ENCODE measurements at regions of chr20 and their contacts with region 1.

Region 1: DNA sequence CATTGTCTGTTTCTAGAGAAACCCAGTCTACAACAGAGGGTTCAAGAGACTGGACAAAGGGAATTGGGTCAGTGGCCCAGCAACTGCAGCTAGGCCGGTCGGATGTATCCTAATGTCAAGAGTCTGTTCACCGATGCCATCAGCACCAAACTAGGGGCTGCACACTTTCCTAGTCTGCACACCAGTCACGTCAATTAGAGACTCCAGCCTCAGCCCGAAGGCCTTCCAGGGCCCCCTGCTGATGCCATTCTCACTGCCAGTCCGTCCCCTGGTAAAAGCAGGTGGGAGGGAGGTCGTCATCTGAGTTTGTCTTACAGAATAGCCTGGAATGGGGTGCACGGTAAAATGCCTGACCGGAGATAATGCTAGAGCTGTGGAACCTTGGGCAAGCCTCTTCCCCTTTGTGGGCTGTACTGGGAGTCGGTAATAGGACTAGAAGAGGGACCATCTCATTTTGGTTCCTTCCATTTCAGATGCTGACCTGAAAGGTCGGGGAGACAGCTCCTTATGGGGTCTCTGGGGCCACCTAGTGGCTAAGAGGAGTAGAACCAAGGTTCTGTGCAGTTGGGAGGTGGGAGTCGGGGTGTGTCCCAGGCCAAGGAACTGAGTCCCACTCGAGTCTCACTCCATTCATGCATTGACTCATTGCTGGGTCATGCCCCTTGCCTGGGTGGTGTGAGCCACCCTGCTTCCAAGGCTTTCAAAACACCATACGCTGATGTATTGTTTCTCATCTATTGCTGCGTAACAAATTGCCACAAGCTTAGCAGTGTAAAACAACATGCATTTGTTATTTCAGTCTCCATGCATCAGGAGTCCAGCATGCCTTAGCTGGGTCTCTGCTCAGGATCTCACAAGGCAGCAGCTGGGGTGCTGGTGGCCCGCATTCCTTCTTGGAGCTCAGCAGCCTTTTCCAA is 5.1 kb downstream of the SOX12 start:
- DNase-seq: no peak
- ATAC-seq: peak; percentile 65
- H3K4me3 ChIP-seq: no peak overlapping the region
- H3K27ac ChIP-seq: no peak overlapping the region
- H3K4me1 ChIP-seq: peaks cover 15% of the 10 kb centered on the region
- H3K27me3 ChIP-seq: no peaks in the 10 kb centered on the region
- CTCF ChIP-seq: peak; percentile 84 to 94 (median 93); a peak in 5 of 6 replicates
- EP300 ChIP-seq: no peak
- POLR2A ChIP-seq: no peak
- RAD21 ChIP-seq: peak; percentile 93

Region 2: GRCh38 chr20:208942-209566 is 121.4 kb before region 1 on chr20:
- CTCF ChIA-PET with region 1: interaction called, 13 read pairs
- POLR2A ChIA-PET with region 1: no interaction called
- RAD21 ChIA-PET with region 1: interaction called, 6 read pairs
- SMC1A ChIA-PET with region 1: interaction called, 16 read pairs
- in situ Hi-C with region 1: loop called (anchors 5 kb)
- intact Hi-C with region 1: loop called (anchors 1 kb)
- DNase-seq: no peak
- ATAC-seq: peak; percentile 91
- H3K4me3 ChIP-seq: no peak overlapping the region
- H3K27ac ChIP-seq: no peak overlapping the region
- H3K4me1 ChIP-seq: no peaks in the 10 kb centered on the region
- H3K27me3 ChIP-seq: peaks cover 0 to 2% of the 10 kb centered on the region in 2 experiments; a peak in 1 of 4 replicates
- CTCF ChIP-seq: peak; percentile 50 to 70 (median 58); a peak in 5 of 6 replicates
- EP300 ChIP-seq: no peak
- POLR2A ChIP-seq: no peak
- RAD21 ChIP-seq: peak; percentile 82

Region 3: DNA sequence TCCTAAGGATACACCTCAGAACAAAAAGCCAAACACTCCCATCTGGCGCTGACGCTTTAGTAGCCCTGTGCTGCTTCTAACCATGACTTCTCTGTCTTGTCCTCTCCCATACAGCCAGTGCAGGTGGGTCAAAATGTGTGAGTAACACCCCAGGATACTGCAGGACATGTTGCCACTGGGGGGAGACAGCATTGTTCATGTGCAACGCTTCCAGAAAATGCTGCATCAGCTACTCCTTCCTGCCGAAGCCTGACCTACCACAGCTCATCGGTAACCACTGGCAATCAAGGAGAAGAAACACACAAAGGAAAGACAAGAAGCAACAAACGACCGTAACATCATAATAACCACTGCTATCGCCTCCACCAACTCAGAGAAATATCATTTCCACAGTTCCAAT is 71.5 kb before region 1 on chr20:
- CTCF ChIA-PET with region 1: interaction called, 59 read pairs
- POLR2A ChIA-PET with region 1: no interaction called
- RAD21 ChIA-PET with region 1: interaction called, 12 read pairs
- SMC1A ChIA-PET with region 1: interaction called, 7 read pairs
- in situ Hi-C with region 1: no loop called
- intact Hi-C with region 1: no loop called
- DNase-seq: no peak
- ATAC-seq: peak; percentile 73
- H3K4me3 ChIP-seq: no peak overlapping the region
- H3K27ac ChIP-seq: no peak overlapping the region
- H3K4me1 ChIP-seq: no peaks in the 10 kb centered on the region
- H3K27me3 ChIP-seq: no peaks in the 10 kb centered on the region; a peak in 1 of 4 replicates
- CTCF ChIP-seq: peak; percentile 20 to 36 (median 32); a peak in 4 of 6 replicates
- EP300 ChIP-seq: no peak
- POLR2A ChIP-seq: no peak
- RAD21 ChIP-seq: no peak

Region 4: DNA sequence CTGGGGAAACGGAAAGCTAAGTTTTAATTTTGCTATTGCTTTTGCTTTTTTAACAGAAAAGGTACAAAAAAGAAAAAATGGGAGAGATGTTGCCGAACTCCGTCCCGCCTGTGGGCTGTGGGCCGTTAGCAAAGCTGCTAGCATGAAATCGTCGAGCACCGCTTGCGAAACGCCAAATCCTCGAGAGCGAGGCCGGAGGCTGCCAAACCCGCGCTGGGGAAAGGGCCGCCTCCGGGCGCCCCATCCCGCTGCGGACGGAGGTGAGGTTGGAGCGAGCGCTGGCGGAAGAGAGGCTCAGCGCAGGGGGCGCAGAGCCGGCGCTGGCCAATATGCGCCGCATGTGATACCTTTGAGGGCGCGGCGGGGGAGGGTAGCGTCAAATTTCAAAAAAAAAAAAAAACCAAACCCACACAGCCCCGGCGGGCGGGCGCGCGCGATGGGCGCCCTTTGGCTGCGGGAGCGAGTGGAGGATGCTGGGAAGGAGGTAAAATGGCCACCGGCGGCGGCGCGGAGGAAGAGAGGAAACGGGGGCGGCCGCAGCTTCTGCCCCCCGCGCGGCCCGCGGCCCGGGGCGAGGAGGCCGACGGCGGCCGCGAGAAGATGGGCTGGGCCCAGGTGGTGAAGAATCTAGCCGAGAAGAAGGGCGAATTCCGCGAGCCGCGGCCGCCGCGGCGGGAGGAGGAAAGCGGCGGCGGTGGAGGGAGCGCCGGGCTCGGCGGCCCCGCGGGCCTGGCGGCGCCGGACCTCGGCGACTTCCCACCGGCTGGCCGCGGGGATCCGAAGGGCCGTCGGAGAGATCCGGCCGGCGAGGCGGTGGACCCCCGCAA is 33.2 kb before region 1 on chr20 and contains the start of gene ZCCHC3:
- CTCF ChIA-PET with region 1: interaction called, 15 read pairs
- POLR2A ChIA-PET with region 1: interaction called, 30 read pairs
- RAD21 ChIA-PET with region 1: interaction called, 4 read pairs
- SMC1A ChIA-PET with region 1: interaction called, 15 read pairs
- in situ Hi-C with region 1: no loop called
- intact Hi-C with region 1: no loop called
- DNase-seq: peak; percentile 59
- ATAC-seq: peak; percentile 86
- H3K4me3 ChIP-seq: peak within 1 kb of the TSS; percentile 94
- H3K27ac ChIP-seq: peak within 1 kb of the TSS; percentile 90
- H3K4me1 ChIP-seq: peaks cover 25% of the 10 kb centered on the region
- H3K27me3 ChIP-seq: no peaks in the 10 kb centered on the region
- CTCF ChIP-seq: peak; percentile 21 to 23 (median 23); a peak in 2 of 6 replicates
- EP300 ChIP-seq: no peak
- POLR2A ChIP-seq: peak; percentile 83
- RAD21 ChIP-seq: no peak
- polyA plus RNA-seq, gene ZCCHC3: 5.3 to 10.8 TPM

Region 5: DNA sequence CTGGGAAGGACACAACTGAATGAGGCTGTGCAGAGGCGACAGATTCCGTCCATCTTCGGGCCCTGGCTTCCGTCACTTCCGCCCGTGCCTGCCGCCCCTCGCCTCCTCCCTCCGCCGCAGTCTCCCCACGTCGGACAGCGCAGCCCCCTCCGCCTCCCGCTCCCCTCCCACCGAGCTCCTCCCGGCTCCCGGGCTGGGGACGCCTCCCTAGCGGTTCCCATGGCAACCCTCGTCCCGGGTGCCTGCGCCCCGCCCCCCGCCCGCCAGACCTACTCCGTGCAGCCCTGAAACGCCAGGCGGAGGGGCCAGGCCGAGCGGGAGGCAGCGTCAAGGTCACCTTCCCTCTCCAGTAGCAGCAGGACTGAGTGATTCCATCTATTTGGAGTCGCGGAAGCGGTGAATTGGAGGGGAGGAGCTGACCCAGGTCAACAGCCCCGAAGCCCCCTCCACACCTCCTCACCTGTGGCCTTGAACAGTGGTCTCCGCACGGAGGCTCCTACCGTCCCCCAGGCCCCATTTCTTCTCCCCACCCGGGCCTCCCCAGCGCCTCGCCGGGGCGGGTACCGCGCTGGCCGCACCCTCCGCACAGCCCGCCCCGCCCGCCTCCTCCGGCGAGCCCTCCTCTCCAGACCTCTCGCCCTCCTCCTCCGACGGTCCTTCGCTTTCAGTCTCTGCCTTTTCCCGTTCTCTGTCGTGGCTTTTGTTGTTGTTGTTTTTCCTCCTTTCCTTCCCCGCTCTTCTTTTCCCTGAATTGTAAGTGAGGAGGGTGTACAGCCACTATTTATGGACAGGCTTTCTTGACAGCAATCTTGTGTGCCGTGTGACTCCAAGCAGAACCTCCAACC is 17.4 kb after region 1 on chr20:
- CTCF ChIA-PET with region 1: interaction called, 27 read pairs
- POLR2A ChIA-PET with region 1: interaction called, 9 read pairs
- RAD21 ChIA-PET with region 1: interaction called, 5 read pairs
- SMC1A ChIA-PET with region 1: interaction called, 6 read pairs
- in situ Hi-C with region 1: no loop called
- intact Hi-C with region 1: no loop called
- DNase-seq: peak; percentile 64
- ATAC-seq: peak; percentile 89
- H3K4me3 ChIP-seq: peak overlapping the region; percentile 83
- H3K27ac ChIP-seq: peak overlapping the region; percentile 73
- H3K4me1 ChIP-seq: 0 out of 2 replicates have a peak, but pooled peaks cover 3% of the 10 kb centered on the region
- H3K27me3 ChIP-seq: no peaks in the 10 kb centered on the region
- CTCF ChIP-seq: no peak
- EP300 ChIP-seq: no peak
- POLR2A ChIP-seq: no peak; the same call in 1 of the 2 replicates
- RAD21 ChIP-seq: no peak

Region 6: DNA sequence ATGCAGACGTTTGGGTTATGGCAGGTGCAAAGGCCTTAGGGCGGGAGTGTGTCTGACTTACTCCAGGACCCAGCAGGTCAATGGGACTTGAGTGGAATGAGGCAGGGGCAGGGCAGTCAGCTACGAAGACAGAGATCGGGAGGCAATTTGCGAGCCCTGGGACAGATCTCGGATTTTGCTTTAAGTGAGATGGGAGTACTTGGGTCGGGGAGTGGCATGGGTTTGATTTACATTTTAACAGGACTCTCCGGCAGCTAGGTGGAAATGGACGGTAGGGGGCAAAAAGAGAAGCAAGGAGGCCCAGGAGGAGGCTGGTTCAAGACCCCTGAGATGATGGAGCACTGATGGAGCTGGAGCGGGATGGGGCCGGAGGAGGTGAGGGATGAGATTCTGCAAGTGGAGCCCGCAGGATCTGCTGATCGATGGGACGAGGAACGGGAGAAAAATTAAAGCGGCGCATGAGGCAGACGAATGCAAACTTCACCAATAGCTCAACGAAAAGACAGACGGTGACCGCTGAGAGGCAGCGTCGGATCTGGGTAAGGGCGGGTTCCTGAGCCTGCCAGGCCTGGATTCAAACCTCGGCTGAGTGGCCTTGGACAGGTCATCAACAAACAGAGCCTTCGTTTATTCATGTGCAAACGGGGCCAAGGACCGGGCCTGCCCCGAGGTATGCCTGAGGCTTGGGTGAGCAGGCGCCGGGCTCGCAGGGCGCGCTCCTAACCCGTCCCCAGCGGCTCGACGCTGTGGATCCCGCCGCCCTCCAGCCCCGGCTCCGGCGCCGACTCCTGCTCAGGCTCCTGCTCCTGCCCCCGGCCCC is 76.9 kb after region 1 on chr20:
- CTCF ChIA-PET with region 1: no interaction called
- POLR2A ChIA-PET with region 1: no interaction called
- RAD21 ChIA-PET with region 1: no interaction called
- SMC1A ChIA-PET with region 1: no interaction called
- in situ Hi-C with region 1: no loop called
- intact Hi-C with region 1: no loop called
- DNase-seq: no peak
- ATAC-seq: peak; percentile 77
- H3K4me3 ChIP-seq: peak overlapping the region; percentile 72
- H3K27ac ChIP-seq: peak overlapping the region; percentile 45; the same call in 1 of the 2 replicates
- H3K4me1 ChIP-seq: peaks cover 5% of the 10 kb centered on the region; the same call in 1 of the 2 replicates
- H3K27me3 ChIP-seq: no peaks in the 10 kb centered on the region; a peak in 1 of 4 replicates
- CTCF ChIP-seq: peak; percentile 35 to 51 (median 43); a peak in 5 of 6 replicates
- EP300 ChIP-seq: no peak
- POLR2A ChIP-seq: peak; percentile 79
- RAD21 ChIP-seq: peak; percentile 25